ENCODE measurements at regions of chr21 and their contacts with region 1.

Region 1: GRCh38 chr21:16082038-16082816 is 352.4 kb downstream of the USP25 start:
- DNase-seq: peak in 1 of 2 experiments; percentile 13
- ATAC-seq: no peak
- H3K4me3 ChIP-seq: no peak overlapping the region
- H3K27ac ChIP-seq: no peak overlapping the region; a peak in 1 of 6 replicates
- H3K4me1 ChIP-seq: peaks cover 12% of the 10 kb centered on the region; the same call in 2 of the 3 replicates
- CTCF ChIP-seq: peak; percentile 42; the same call in 2 of the 3 replicates
- EP300 ChIP-seq: no peak
- POLR2A ChIP-seq: no peak
- RAD21 ChIP-seq: peak; percentile 31 to 59; a peak in 3 of 5 replicates

Region 2: GRCh38 chr21:16279731-16280581 is 197.7 kb after region 1 on chr21:
- CTCF ChIA-PET with region 1: no interaction called
- POLR2A ChIA-PET with region 1: no interaction called
- DNase-seq: peak in 1 of 2 experiments; percentile 25
- ATAC-seq: peak in 1 of 2 experiments; percentile 91; a peak in 3 of 6 replicates
- H3K4me3 ChIP-seq: no peak overlapping the region
- H3K27ac ChIP-seq: no peak overlapping the region
- H3K4me1 ChIP-seq: no peaks in the 10 kb centered on the region
- CTCF ChIP-seq: no peak
- EP300 ChIP-seq: no peak
- POLR2A ChIP-seq: no peak
- RAD21 ChIP-seq: no peak

Region 3: DNA sequence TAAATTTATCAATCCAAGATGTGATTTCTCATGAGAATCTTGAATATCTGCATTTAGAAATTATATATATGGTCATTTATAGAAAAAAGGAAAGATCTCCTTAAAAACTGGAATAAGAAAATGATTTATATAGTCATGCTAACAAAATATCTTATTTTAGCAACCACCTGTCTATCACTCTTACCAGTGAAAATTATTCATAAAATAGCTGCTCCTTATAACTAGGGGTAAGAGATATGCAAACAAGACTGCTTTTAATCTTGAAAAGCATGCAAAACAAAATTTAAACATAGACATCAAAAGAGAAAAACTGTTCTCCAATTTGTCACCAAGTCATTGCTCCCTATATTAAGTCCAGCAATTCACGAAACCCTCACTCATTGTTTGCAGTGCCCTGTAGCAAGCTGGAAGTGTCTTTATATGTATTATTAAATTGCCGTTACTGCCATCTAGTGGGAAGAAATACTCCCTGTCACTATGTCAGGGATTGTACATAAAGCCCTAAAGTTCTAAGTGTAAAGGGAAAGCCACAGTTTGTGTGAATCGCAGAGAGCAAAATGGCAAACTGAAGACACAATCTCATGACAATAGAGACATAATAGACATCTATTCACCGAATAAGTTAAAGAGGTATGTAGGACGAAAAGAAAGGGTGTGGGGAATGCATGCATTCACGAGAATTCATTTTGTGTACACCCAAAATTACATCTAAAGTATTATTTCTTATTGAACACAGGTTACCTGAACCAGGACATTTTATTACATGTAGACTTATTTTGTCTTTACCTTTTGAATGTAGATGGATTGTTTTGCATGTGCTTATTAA is 248.1 kb after region 1 on chr21:
- CTCF ChIA-PET with region 1: interaction called, 28 read pairs
- POLR2A ChIA-PET with region 1: no interaction called
- DNase-seq: peak; percentile 1 to 76
- ATAC-seq: peak; percentile 97; a peak in 5 of 6 replicates
- H3K4me3 ChIP-seq: no peak overlapping the region
- H3K27ac ChIP-seq: no peak overlapping the region
- H3K4me1 ChIP-seq: peaks cover 8% of the 10 kb centered on the region; the same call in 1 of the 3 replicates
- CTCF ChIP-seq: peak; percentile 59
- EP300 ChIP-seq: no peak
- POLR2A ChIP-seq: no peak
- RAD21 ChIP-seq: peak; percentile 69 to 74

Measured in A549 (cell line).